IMR-90 (cell line): ENCODE measurements at regions of chr9 and their contacts with region 1.

Region 1: GRCh38 chr9:3359778-3360177 is 166.0 kb downstream of the RFX3 start:
- DNase-seq: no peak
- ATAC-seq: no peak
- H3K4me3 ChIP-seq: no peak overlapping the region
- H3K27ac ChIP-seq: no peak overlapping the region
- H3K4me1 ChIP-seq: no peaks in the 10 kb centered on the region
- H3K27me3 ChIP-seq: no peaks in the 10 kb centered on the region
- CTCF ChIP-seq: no peak
- POLR2A ChIP-seq: no peak
- RAD21 ChIP-seq: no peak

Region 2: GRCh38 chr9:3348169-3348568 is 11.6 kb before region 1 on chr9:
- CTCF ChIA-PET with region 1: no interaction called
- POLR2A ChIA-PET with region 1: no interaction called
- dilution Hi-C with region 1: no loop called
- in situ Hi-C with region 1: no loop called
- intact Hi-C with region 1: loop called (anchors 1 kb)
- DNase-seq: no peak
- ATAC-seq: no peak
- H3K4me3 ChIP-seq: no peak overlapping the region
- H3K27ac ChIP-seq: no peak overlapping the region
- H3K4me1 ChIP-seq: no peaks in the 10 kb centered on the region
- H3K27me3 ChIP-seq: no peaks in the 10 kb centered on the region
- CTCF ChIP-seq: no peak
- POLR2A ChIP-seq: no peak
- RAD21 ChIP-seq: no peak